ENCODE measurements at regions of chr9 and their contacts with region 1.

Region 1: GRCh38 chr9:127734747-127735529 is at the start of gene TOR2A:
- DNase-seq: peak; percentile 98
- H3K4me3 Mint-ChIP-seq: peak within 1 kb of the TSS; percentile 91
- H3K27ac Mint-ChIP-seq: peak within 1 kb of the TSS; percentile 95
- H3K4me1 Mint-ChIP-seq: peaks cover 11% of the 10 kb centered on the region
- H3K27me3 Mint-ChIP-seq: no peaks in the 10 kb centered on the region
- total RNA-seq, gene TOR2A: 20.2 and 20.6 TPM in 2 replicates

Region 2: GRCh38 chr9:126235336-126236243 is 1499.3 kb before region 1 on chr9:
- intact Hi-C with region 1: no loop called
- DNase-seq: no peak
- H3K4me3 Mint-ChIP-seq: no peak overlapping the region
- H3K27ac Mint-ChIP-seq: no peak overlapping the region
- H3K4me1 Mint-ChIP-seq: no peaks in the 10 kb centered on the region
- H3K27me3 Mint-ChIP-seq: peaks cover under 1% of the 10 kb centered on the region

Region 3: DNA sequence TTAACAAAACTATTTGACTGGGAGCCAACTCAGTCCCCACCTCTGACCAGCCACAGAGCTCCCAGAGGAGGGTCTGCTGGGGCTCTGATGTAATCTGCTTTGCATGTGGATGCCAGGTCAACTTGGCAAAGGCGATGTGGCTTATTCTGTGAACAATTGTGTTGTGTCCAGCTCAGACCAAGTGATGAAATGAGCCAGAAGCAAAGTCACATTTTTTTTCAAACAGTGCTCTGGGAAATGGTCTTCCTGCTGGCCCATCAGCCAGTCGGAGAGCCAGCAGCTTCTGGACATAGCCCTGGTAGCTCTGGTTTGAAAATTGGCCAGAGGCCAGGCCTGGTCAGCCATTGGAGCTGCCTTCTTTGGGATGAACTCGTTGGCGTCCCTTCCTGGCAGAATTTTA is 699.0 kb before region 1 on chr9:
- intact Hi-C with region 1: no loop called
- DNase-seq: no peak
- H3K4me3 Mint-ChIP-seq: no peak overlapping the region
- H3K27ac Mint-ChIP-seq: no peak overlapping the region
- H3K4me1 Mint-ChIP-seq: no peaks in the 10 kb centered on the region
- H3K27me3 Mint-ChIP-seq: peaks cover 25% of the 10 kb centered on the region

Region 4: GRCh38 chr9:127503947-127504782 is 230.8 kb before region 1 on chr9:
- intact Hi-C with region 1: loop called (anchors 1 kb)
- DNase-seq: peak; percentile 73
- H3K4me3 Mint-ChIP-seq: no peak overlapping the region
- H3K27ac Mint-ChIP-seq: peak overlapping the region; percentile 16
- H3K4me1 Mint-ChIP-seq: no peaks in the 10 kb centered on the region
- H3K27me3 Mint-ChIP-seq: no peaks in the 10 kb centered on the region

Region 5: DNA sequence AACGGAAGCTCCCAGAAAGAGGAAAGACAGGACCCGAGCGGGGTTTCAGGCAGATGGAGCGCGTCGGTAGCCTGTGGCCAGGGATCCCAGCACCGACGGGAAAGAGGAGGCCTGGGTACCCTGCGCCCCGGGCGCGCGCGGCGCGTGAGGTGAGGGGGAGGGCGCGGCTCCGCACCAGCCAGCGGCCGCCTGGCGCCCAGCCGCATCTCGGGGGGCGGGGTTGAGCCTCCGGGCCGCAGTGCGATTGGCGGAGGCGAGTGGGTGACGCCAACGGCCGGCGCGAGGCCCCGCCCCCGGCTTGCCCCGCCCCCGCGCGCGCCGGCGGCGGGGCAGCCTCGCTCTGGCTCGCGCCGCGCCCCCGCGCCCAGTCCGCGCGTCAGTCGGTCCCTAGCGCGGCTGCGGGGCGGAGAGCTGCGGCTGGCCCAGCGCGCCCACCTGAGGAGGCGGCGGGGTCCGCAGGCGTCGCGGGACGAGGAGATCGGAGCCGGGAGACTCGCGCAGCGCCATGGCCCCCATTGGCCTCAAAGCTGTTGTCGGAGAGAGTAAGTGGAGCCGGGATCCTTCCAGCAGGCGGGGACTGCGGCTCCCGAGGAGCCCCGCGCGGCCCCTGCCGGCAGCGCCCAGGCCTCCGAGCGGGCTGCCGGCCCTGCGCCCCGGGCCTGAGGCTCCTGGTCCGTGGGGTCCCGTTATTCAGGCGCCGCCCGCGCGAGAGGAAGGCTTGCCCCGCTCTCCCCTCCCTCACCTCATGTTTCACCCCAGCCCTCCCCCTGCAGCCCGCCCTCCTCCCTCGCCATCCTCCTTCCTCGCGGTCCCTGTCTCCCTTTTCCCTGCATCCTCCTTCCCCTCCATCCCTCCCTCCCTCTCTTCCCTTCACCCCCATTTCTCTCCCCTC is 122.8 kb before region 1 on chr9 and contains the start of gene STXBP1:
- intact Hi-C with region 1: loop called (anchors 2 kb)
- DNase-seq: peak; percentile 87
- H3K4me3 Mint-ChIP-seq: peak within 1 kb of the TSS; percentile 93
- H3K27ac Mint-ChIP-seq: peak within 1 kb of the TSS; percentile 84
- H3K4me1 Mint-ChIP-seq: peaks cover 27% of the 10 kb centered on the region
- H3K27me3 Mint-ChIP-seq: peaks cover 35% of the 10 kb centered on the region
- total RNA-seq, gene STXBP1: 44.5 and 48.9 TPM in 2 replicates

Region 6: DNA sequence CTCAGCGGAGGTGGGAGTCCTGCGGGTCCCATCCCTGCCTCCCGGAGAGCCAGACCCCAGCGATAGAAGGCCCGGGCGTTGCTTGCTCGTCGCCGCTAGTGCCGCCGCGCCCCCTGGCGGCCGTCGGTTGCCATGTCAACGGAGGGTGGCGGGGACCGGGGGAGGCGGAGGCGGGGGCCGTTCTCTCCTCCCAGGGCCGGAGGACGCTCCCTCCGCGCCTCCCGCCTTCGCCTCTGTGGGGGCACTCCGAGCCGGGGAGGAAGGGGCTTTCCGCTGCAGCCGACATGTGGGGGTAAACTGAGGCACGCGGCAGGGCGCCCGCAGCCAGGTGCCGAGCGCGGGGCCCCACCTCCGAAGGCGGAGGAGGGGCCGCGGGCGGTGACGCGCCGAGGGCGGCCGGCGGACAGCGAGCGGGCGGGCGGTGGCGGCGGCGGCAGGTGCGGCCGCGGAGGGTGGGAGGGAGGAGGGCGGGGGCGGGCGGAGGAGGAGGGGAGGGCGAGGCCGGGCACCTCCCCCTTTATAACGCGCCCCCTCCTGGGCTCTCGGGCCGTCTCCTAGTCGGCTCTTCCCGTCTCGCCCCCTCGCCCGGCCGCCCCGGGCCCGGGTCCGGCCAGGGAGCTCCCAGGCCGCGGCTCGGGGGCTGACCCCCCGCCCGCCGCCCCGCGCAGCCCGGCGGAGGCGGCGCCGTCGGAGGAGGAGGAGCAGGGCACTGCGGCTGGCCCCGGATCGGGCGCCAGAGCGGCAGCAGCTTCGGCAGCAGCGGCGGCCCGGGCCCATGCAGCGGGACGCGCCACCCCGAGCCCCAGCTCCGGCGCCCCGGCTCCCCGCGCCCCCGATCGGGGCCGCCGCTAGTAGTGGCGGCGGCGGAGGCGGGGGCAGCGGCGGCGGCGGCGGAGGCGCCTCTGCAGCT is 50.3 kb after region 1 on chr9:
- intact Hi-C with region 1: loop called (anchors 1 kb)
- DNase-seq: peak; percentile 88
- H3K4me3 Mint-ChIP-seq: peak overlapping the region; percentile 97
- H3K27ac Mint-ChIP-seq: peak overlapping the region; percentile 86
- H3K4me1 Mint-ChIP-seq: peaks cover 56% of the 10 kb centered on the region
- H3K27me3 Mint-ChIP-seq: no peaks in the 10 kb centered on the region

Region 7: GRCh38 chr9:127916665-127917613 is 182.0 kb after region 1 on chr9 and contains the start of gene ST6GALNAC4:
- intact Hi-C with region 1: loop called (anchors 1 kb)
- DNase-seq: peak; percentile 90
- H3K4me3 Mint-ChIP-seq: peak within 1 kb of the TSS; percentile 80
- H3K27ac Mint-ChIP-seq: peak within 1 kb of the TSS; percentile 81
- H3K4me1 Mint-ChIP-seq: peaks cover 40% of the 10 kb centered on the region
- H3K27me3 Mint-ChIP-seq: peaks cover under 1% of the 10 kb centered on the region
- total RNA-seq, gene ST6GALNAC4: 25.6 and 28.7 TPM in 2 replicates

Measured in activated T-helper 2 cell treated with anti-CD3 and anti-CD28 coated beads, Interferon-gamma antibody, Interleukin-2, Interleukin-4, amounts not matched to agents 10 μg/mL and 5 μg/mL and 100 μg/mL, durations not matched to agents 14 hours and 24 hours and 36 hours (primary cell).